Activated CD8-positive, alpha-beta T cell treated with anti-CD3 and anti-CD28 coated beads, Interleukin-2, amount 10 ng/mL, durations not matched to agents 7 days and 5 days (primary cell): ENCODE measurements at regions of chr22 and their contacts with region 1.

Region 1: DNA sequence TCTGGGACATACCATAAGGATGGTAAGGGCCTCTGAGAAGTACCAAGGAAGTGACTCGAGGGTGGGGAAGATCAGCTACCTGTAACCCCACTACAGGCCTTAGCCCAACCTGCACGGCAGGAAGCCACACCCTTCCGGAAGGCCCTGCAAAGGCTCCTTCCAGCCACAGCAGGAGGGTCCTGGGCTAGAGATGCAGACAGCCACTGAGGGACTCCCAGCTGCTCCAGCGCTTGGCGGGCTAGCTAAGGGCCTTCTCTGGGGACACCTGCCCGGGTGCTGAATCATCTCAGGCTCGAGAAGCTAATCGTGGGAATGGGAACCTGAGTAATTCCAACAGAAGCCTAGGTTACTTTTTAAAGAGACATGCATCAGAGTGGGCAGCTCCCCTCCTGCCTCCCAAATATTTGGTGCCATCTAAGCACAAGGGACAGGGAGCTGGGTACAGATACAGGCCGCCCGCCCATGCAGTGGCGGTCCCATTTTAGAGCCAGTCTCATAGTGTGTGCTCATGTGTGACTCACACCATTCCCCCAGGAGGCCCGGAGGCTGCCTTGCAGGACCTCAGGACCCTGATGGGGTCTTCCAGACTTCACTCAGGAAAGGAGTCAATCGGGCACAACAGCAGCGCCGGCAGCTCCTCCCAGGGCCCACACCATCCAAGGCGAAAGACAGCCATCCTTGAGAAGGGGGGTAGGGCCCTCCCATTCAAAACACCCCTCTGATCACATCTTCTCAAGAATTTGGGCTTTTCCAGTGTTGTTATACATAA is 8.0 kb downstream of the MYH9 start:
- DNase-seq: peak; percentile 80
- ATAC-seq: peak; percentile 61
- H3K4me3 Mint-ChIP-seq: peak overlapping the region; percentile 78
- H3K27ac Mint-ChIP-seq: peak overlapping the region; percentile 98
- H3K4me1 Mint-ChIP-seq: peaks cover 93% of the 10 kb centered on the region
- H3K27me3 Mint-ChIP-seq: no peaks in the 10 kb centered on the region

Region 2: DNA sequence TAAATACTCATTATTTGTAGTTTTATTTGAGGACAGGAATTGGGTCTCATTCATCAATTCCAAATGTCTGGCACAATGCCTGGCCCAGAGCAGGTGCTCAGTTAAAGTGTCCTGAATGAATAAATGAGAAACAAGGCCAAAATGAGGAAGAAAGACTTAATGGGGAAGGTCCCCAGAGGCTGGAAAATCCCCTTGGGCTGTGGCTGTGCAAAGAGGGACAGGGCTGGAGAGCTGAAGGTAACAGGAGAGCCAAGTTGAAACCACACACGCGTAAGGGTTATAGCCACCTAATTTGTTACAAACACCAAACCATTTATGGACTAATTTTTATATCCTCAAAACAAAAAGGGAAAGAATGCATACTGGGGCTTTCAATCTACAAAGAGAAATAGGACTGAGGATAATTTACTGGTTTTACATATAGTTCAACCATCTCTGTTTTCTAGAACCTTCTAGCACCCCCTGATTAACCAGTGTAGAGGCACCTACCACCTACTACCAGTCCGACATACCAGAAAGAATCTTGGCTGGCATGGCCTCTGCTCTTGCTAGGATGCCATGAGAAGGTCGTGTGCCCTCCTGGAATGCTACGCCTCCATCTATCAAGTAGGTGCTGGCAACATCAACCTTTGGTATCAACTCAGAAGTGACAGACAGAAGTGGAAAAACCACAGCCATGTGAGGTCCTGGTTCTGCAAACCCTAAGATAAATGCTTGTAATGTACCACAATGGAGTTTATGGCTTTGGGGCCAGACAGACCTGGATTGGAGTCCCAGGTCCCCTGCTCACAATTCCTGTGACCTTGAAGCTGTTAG is 20.4 kb before region 1 on chr22:
- CTCF ChIA-PET with region 1: interaction called, 32 read pairs
- POLR2A ChIA-PET with region 1: interaction called, 24 read pairs
- DNase-seq: no peak
- ATAC-seq: no peak
- H3K4me3 Mint-ChIP-seq: peak overlapping the region; percentile 13
- H3K27ac Mint-ChIP-seq: peak overlapping the region; percentile 74
- H3K4me1 Mint-ChIP-seq: peaks cover 94% of the 10 kb centered on the region
- H3K27me3 Mint-ChIP-seq: no peaks in the 10 kb centered on the region

Region 3: DNA sequence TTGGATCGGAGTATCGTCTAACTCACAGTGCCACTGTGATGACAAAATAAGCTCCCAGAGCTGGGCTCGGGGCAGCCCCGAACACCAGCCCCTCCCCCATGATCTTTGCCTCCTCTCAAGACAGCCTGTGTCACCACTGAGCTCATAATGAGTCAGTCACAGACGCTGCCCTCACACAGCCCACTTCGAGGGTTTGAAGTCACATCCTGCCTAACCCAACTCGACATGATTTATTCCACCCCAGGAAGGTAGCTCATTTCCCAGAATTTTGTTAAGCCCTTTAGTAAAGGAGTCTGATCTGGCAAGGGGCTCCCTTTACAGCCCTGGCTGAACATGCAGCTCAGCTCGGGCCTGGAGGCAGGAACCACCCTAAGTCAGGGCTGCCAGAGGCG is 14.8 kb before region 1 on chr22:
- CTCF ChIA-PET with region 1: interaction called, 32 read pairs
- POLR2A ChIA-PET with region 1: interaction called, 24 read pairs
- DNase-seq: peak; percentile 93
- ATAC-seq: peak; percentile 84
- H3K4me3 Mint-ChIP-seq: peak overlapping the region; percentile 52
- H3K27ac Mint-ChIP-seq: peak overlapping the region; percentile 88
- H3K4me1 Mint-ChIP-seq: peaks cover 97% of the 10 kb centered on the region
- H3K27me3 Mint-ChIP-seq: no peaks in the 10 kb centered on the region

Region 4: GRCh38 chr22:36395055-36395849 is 15.5 kb after region 1 on chr22:
- CTCF ChIA-PET with region 1: no interaction called
- POLR2A ChIA-PET with region 1: no interaction called
- DNase-seq: no peak
- ATAC-seq: no peak
- H3K4me3 Mint-ChIP-seq: no peak overlapping the region
- H3K27ac Mint-ChIP-seq: peak overlapping the region; percentile 24
- H3K4me1 Mint-ChIP-seq: peaks cover 40% of the 10 kb centered on the region
- H3K27me3 Mint-ChIP-seq: no peaks in the 10 kb centered on the region

Region 5: DNA sequence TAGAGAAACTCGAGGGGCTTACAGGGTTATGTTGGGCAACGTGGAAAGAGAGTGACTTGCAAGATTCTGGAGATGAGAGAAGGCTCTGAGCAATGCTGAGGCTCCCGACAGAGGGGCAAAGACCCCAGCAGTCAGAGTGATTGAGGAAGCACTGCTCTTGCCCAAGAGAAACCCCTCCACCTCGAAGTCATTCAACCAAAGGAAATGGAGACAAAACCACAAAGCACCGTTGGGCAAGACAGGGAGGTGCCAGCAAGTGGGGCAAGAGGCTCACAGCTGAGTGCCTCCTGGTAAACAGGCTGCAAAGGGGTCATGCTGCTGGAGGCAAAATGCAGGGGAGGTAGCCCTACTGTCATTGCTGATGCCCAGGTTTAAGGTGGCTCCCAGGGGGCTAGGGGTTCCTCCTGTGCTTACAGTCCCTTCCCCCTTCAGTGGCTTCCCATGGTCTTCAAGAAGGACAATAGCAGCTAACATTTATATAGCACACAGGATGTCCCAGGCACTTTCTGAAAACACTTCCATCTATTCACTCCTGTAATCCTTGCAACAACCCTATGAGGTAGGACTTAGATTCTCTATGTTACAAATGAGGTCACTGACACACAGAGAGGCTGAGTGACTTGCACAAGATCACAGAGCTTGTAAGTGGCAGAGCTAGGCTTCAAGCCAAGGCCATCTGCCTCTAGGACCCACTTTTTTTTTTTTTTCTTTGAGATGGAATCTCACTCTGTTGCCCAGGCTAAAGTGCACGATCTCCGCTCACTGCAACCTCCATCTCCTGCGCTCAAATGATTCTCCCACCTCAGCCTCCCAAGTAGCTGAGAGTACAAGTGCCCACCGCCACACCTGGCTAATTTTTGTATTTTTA is 26.1 kb after region 1 on chr22:
- CTCF ChIA-PET with region 1: interaction called, 8 read pairs
- POLR2A ChIA-PET with region 1: interaction called, 13 read pairs
- DNase-seq: peak; percentile 77
- ATAC-seq: peak; percentile 72
- H3K4me3 Mint-ChIP-seq: peak overlapping the region; percentile 40
- H3K27ac Mint-ChIP-seq: peak overlapping the region; percentile 93
- H3K4me1 Mint-ChIP-seq: peaks cover 51% of the 10 kb centered on the region
- H3K27me3 Mint-ChIP-seq: no peaks in the 10 kb centered on the region

Region 6: DNA sequence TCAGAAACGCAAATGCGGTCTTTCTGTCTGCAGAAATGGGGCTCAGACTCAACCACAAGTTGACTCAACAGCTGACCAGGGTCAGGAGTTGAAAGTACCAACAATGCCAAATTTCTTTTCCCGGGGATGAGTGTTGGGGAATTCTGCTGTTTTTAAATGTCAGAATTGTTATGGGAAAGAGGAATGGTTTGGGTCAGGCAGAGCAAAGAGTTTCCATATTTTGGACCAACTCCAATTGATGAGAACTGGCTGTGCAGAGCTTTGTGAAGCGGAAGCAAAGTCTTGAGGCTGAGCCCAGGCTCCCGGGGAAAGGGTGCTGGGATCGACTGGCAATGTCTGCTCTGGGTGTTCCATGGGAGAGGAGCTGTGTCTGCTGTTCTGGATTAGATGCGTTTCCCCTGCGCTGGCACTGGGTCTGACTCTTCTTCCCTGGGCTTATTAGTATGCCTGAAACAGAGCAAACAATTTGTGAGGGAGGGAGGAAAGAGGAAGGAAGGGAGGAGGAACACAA is 65.4 kb after region 1 on chr22:
- CTCF ChIA-PET with region 1: no interaction called
- POLR2A ChIA-PET with region 1: no interaction called
- DNase-seq: no peak
- ATAC-seq: no peak
- H3K4me3 Mint-ChIP-seq: no peak overlapping the region
- H3K27ac Mint-ChIP-seq: no peak overlapping the region
- H3K4me1 Mint-ChIP-seq: peaks cover 52% of the 10 kb centered on the region
- H3K27me3 Mint-ChIP-seq: no peaks in the 10 kb centered on the region

Region 7: DNA sequence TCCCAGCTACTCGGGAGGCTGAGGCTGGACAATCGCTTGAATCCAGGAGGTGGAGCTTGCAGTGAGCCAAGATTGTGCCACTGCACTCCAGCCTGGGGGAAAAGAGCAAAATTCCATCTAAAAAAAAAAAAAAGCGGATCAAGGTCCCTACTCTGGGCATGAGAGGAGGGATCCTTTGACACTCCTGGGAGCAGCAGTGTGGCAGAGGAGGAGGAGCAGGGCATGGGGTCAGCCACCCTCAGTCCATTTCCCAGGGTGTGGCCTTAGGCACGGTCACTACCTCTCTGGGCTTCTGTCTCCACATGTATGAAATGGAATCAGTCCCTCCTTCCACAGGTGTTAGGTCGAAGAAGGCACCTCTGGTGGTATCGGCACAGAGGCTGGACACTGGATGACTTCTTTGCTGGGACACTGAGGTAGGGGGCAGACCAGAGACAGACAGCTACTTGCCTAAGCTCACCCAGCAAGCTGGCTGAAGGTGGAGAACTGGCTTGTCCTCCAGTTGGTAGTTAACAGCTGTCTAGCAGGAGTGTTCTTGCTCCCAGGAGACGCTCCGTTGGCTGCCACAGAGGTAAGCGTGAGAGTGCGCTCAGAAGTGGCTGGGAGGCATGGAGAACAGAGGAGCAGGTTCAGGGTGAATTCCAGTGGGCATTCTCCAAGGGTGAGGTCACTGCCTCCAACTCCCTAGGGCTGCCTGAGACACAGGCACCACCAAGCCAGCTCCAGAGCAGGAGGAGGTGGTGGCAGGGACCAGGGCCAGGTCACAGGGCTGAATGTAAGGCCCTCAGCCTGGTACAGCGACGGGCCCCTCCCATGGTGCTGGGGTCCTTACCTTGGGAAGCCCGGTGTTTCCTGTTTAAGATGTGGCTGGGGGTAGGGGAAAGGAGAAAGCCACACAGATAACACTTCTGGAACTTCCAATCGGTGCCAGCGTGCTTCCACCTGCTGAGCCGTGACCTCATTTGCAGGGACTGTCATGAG is 82.2 kb after region 1 on chr22:
- CTCF ChIA-PET with region 1: no interaction called
- POLR2A ChIA-PET with region 1: no interaction called
- DNase-seq: no peak
- ATAC-seq: no peak
- H3K4me3 Mint-ChIP-seq: no peak overlapping the region
- H3K27ac Mint-ChIP-seq: no peak overlapping the region
- H3K4me1 Mint-ChIP-seq: peaks cover 31% of the 10 kb centered on the region
- H3K27me3 Mint-ChIP-seq: no peaks in the 10 kb centered on the region